ENCODE measurements at regions of chr3 and their contacts with region 1.

Region 1: GRCh38 chr3:138890555-138891187 is 55.9 kb upstream of the PIK3CB start:
- DNase-seq: no peak
- ATAC-seq: no peak
- H3K4me3 ChIP-seq: no peak overlapping the region
- H3K27ac ChIP-seq: peak overlapping the region; percentile 45
- H3K4me1 ChIP-seq: peaks cover 6% of the 10 kb centered on the region
- H3K27me3 ChIP-seq: no peaks in the 10 kb centered on the region
- CTCF ChIP-seq: no peak

Region 2: GRCh38 chr3:138608322-138609135 is 282.1 kb before region 1 on chr3 and contains the start of gene FAIM:
- CTCF ChIA-PET with region 1: no interaction called
- POLR2A ChIA-PET with region 1: no interaction called
- intact Hi-C with region 1: no loop called
- DNase-seq: peak; percentile 58
- ATAC-seq: peak; percentile 83
- H3K4me3 ChIP-seq: peak within 1 kb of the TSS; percentile 83
- H3K27ac ChIP-seq: peak within 1 kb of the TSS; percentile 70
- H3K4me1 ChIP-seq: peaks cover 12% of the 10 kb centered on the region; the same call in 1 of the 2 replicates
- H3K27me3 ChIP-seq: no peaks in the 10 kb centered on the region
- CTCF ChIP-seq: no peak
- total RNA-seq, gene FAIM: 25.0 and 29.2 TPM in 2 replicates

Region 3: GRCh38 chr3:138862924-138863775 is 27.5 kb before region 1 on chr3:
- CTCF ChIA-PET with region 1: no interaction called
- POLR2A ChIA-PET with region 1: interaction called, 3 read pairs
- intact Hi-C with region 1: loop called (anchors 2 kb)
- DNase-seq: peak; percentile 88
- ATAC-seq: peak; percentile 97
- H3K4me3 ChIP-seq: peak overlapping the region; percentile 40; the same call in 1 of the 2 replicates
- H3K27ac ChIP-seq: peak overlapping the region; percentile 98
- H3K4me1 ChIP-seq: peaks cover 23% of the 10 kb centered on the region
- H3K27me3 ChIP-seq: no peaks in the 10 kb centered on the region
- CTCF ChIP-seq: no peak